ENCODE measurements at regions of chr10 and their contacts with region 1.

Region 1: DNA sequence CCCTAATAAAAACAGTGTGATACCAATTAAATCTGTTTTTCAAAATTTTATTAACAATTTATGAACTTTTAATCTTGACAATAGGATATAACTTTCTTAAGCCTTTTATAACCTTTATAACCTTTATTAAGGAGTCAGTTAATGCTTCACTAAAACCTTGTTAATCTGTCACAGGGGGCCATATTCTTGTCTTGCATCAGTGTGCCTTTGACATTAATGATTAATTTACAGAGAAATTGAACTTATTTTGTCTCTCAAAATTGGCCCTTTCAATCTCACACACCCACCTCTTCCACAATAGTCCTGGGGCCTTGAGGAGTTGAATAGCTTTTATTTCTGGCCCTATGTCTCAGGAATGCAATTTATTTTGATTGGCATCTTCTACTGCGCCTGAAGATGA is 68.5 kb downstream of the AKR1C4 start:
- DNase-seq: no peak
- H3K4me3 ChIP-seq: no peak overlapping the region
- H3K4me3 Mint-ChIP-seq: no peak overlapping the region
- H3K27ac Mint-ChIP-seq: no peak overlapping the region
- H3K4me1 ChIP-seq: peaks cover 9% of the 10 kb centered on the region; the same call in 1 of the 2 replicates
- H3K4me1 Mint-ChIP-seq: no peaks in the 10 kb centered on the region
- H3K27me3 ChIP-seq: no peaks in the 10 kb centered on the region
- H3K27me3 Mint-ChIP-seq: no peaks in the 10 kb centered on the region
- CTCF ChIP-seq: no peak

Region 2: GRCh38 chr10:4889959-4890358 is 375.2 kb before region 1 on chr10:
- CTCF ChIA-PET with region 1: no interaction called
- POLR2A ChIA-PET with region 1: interaction called, 10 read pairs
- intact Hi-C with region 1: no loop called
- DNase-seq: no peak
- H3K4me3 ChIP-seq: no peak overlapping the region
- H3K4me3 Mint-ChIP-seq: no peak overlapping the region
- H3K27ac Mint-ChIP-seq: no peak overlapping the region
- H3K4me1 ChIP-seq: no peaks in the 10 kb centered on the region
- H3K4me1 Mint-ChIP-seq: no peaks in the 10 kb centered on the region
- H3K27me3 ChIP-seq: no peaks in the 10 kb centered on the region
- H3K27me3 Mint-ChIP-seq: no peaks in the 10 kb centered on the region
- CTCF ChIP-seq: no peak

Region 3: GRCh38 chr10:4990217-4990616 is 274.9 kb before region 1 on chr10:
- CTCF ChIA-PET with region 1: no interaction called
- POLR2A ChIA-PET with region 1: no interaction called
- intact Hi-C with region 1: no loop called
- DNase-seq: no peak
- H3K4me3 ChIP-seq: no peak overlapping the region
- H3K4me3 Mint-ChIP-seq: no peak overlapping the region
- H3K27ac Mint-ChIP-seq: no peak overlapping the region
- H3K4me1 ChIP-seq: no peaks in the 10 kb centered on the region
- H3K4me1 Mint-ChIP-seq: no peaks in the 10 kb centered on the region
- H3K27me3 ChIP-seq: no peaks in the 10 kb centered on the region
- H3K27me3 Mint-ChIP-seq: no peaks in the 10 kb centered on the region
- CTCF ChIP-seq: no peak

Region 4: DNA sequence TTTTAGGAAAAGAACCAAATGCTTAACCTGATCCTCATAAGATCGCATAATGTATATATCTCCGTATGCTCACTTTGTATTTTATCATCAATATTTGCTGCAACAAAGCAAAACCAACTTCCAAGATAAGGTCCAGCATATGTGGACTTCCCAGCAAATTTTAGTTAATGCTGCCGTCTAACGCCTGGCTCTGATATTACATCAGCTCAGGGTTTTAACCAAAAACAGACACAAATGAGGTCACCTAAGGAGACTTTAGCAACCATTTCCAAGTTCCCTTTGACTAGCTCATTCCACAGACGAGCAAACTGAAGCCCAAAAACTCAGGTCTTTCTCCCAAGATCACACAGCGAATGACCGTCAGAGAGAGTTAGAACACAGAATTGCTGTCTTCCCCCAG is 40.2 kb after region 1 on chr10:
- CTCF ChIA-PET with region 1: no interaction called
- POLR2A ChIA-PET with region 1: no interaction called
- intact Hi-C with region 1: no loop called
- DNase-seq: no peak
- H3K4me3 ChIP-seq: no peak overlapping the region
- H3K4me3 Mint-ChIP-seq: no peak overlapping the region
- H3K27ac Mint-ChIP-seq: no peak overlapping the region
- H3K4me1 ChIP-seq: no peaks in the 10 kb centered on the region
- H3K4me1 Mint-ChIP-seq: no peaks in the 10 kb centered on the region
- H3K27me3 ChIP-seq: no peaks in the 10 kb centered on the region; the same call in 1 of the 2 replicates
- H3K27me3 Mint-ChIP-seq: peaks cover 13% of the 10 kb centered on the region
- CTCF ChIP-seq: no peak

Measured in Caco-2 (cell line).